CD8-positive, alpha-beta T cell (primary cell): ENCODE measurements at regions of chr15 and their contacts with region 1.

Region 1: GRCh38 chr15:78131295-78132061 is at the start of gene CIB2:
- DNase-seq: peak; percentile 47 to 89 (median 74)
- ATAC-seq: peak; percentile 87
- H3K4me3 ChIP-seq: peak within 1 kb of the TSS; percentile 82 to 91
- H3K4me3 Mint-ChIP-seq: peak within 1 kb of the TSS; percentile 82
- H3K27ac ChIP-seq: peak within 1 kb of the TSS; percentile 65 to 89
- H3K27ac Mint-ChIP-seq: peak within 1 kb of the TSS; percentile 87
- H3K4me1 ChIP-seq: peaks cover 15% of the 10 kb centered on the region
- H3K4me1 Mint-ChIP-seq: peaks cover 26% of the 10 kb centered on the region
- H3K27me3 ChIP-seq: no peaks in the 10 kb centered on the region
- H3K27me3 Mint-ChIP-seq: no peaks in the 10 kb centered on the region
- CTCF ChIP-seq: peak; percentile 75
- total RNA-seq, gene CIB2: 1.2 to 1.9 TPM

Region 2: DNA sequence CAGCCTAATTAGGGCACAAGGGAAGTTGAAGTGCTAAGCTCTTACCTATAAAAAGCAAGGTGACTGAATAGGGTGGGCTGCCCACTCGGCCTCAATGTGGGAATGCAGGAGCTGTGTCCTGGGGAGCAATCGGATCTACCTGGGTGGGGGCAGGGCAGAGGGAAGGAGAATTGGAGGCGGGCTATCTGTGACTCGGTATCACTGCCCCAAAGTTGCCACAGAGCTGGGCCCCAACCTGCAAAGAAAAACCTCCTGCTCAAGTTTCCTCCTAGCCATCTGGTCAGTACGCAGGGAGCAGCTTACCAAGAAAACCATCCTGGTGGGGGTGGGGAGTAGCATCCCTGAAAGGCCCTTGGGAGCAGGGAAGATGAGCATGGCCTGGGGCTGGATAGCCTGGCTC is 11.0 kb before region 1 on chr15:
- CTCF ChIA-PET with region 1: interaction called, 11 read pairs
- POLR2A ChIA-PET with region 1: no interaction called
- intact Hi-C with region 1: no loop called
- DNase-seq: no peak
- ATAC-seq: no peak
- H3K4me3 ChIP-seq: no peak overlapping the region
- H3K4me3 Mint-ChIP-seq: no peak overlapping the region
- H3K27ac ChIP-seq: no peak overlapping the region
- H3K27ac Mint-ChIP-seq: no peak overlapping the region
- H3K4me1 ChIP-seq: no peaks in the 10 kb centered on the region
- H3K4me1 Mint-ChIP-seq: no peaks in the 10 kb centered on the region
- H3K27me3 ChIP-seq: no peaks in the 10 kb centered on the region
- H3K27me3 Mint-ChIP-seq: no peaks in the 10 kb centered on the region
- CTCF ChIP-seq: no peak

Region 3: DNA sequence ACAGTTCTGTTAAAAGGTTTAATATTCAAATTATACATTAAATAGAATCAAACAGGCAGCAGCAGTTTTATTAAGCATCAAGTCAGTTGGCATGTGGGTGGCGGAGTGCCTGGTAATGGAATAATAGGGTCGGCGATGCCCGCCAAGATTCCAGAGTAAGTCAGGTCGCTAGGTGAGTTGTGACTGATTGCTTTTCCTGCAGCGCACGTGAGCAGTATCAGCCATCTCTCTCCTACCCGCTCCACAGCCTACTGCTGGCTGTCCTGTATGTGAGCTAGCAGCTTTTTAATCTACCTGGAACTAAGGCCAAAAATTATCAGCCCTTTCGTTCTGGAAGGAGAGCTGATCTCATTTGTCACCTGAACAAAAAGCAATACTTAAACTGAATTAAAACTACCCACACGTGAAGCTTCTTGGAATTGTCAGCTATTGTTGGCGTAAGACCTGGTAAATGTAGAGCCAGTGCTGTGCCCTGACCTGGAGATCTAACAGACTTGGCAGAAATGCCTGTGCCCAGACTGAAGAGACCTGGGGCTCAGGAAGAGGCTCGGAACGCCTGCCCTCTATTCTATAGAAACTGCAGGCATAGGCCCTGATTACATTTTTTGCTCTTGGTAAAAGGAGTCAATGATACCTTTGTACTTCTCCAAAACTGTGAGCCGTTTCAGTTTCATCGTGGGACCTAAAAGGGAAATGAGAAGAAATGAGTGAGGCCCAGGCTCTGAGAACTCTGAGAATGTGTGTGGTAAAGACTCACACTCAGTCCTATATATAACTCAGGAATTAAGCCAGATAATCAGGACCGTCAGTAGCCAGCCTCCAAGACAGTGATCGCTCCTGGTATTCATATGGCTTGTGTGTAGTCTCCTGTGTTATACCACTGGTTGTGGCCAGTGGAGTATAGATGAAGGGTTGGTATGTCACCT is 39.6 kb after region 1 on chr15:
- CTCF ChIA-PET with region 1: no interaction called
- POLR2A ChIA-PET with region 1: interaction called, 3 read pairs
- intact Hi-C with region 1: loop called (anchors 5 kb)
- DNase-seq: no peak
- ATAC-seq: no peak
- H3K4me3 ChIP-seq: no peak overlapping the region
- H3K4me3 Mint-ChIP-seq: no peak overlapping the region
- H3K27ac ChIP-seq: no peak overlapping the region
- H3K27ac Mint-ChIP-seq: no peak overlapping the region
- H3K4me1 ChIP-seq: peaks cover 26% of the 10 kb centered on the region
- H3K4me1 Mint-ChIP-seq: peaks cover 36% of the 10 kb centered on the region
- H3K27me3 ChIP-seq: no peaks in the 10 kb centered on the region
- H3K27me3 Mint-ChIP-seq: no peaks in the 10 kb centered on the region
- CTCF ChIP-seq: no peak

Region 4: GRCh38 chr15:78241007-78241406 is 109.5 kb after region 1 on chr15:
- CTCF ChIA-PET with region 1: interaction called, 8 read pairs
- POLR2A ChIA-PET with region 1: interaction called, 3 read pairs
- intact Hi-C with region 1: loop called (anchors 1 to 5 kb)
- DNase-seq: peak; percentile 65 to 90 (median 81)
- ATAC-seq: peak; percentile 96
- H3K4me3 ChIP-seq: no peak overlapping the region
- H3K4me3 Mint-ChIP-seq: no peak overlapping the region
- H3K27ac ChIP-seq: no peak overlapping the region
- H3K27ac Mint-ChIP-seq: no peak overlapping the region
- H3K4me1 ChIP-seq: no peaks in the 10 kb centered on the region
- H3K4me1 Mint-ChIP-seq: peaks cover 1% of the 10 kb centered on the region
- H3K27me3 ChIP-seq: peaks cover 0 to 3% of the 10 kb centered on the region in 2 experiments
- H3K27me3 Mint-ChIP-seq: no peaks in the 10 kb centered on the region
- CTCF ChIP-seq: peak; percentile 79

Region 5: GRCh38 chr15:78422571-78423340 is 291.3 kb after region 1 on chr15:
- CTCF ChIA-PET with region 1: no interaction called
- POLR2A ChIA-PET with region 1: no interaction called
- intact Hi-C with region 1: loop called in 1 of 2 experiments (anchors 5 kb)
- DNase-seq: peak; percentile 31 to 75 (median 57)
- ATAC-seq: peak; percentile 92
- H3K4me3 ChIP-seq: no peak overlapping the region
- H3K4me3 Mint-ChIP-seq: no peak overlapping the region
- H3K27ac ChIP-seq: no peak overlapping the region
- H3K27ac Mint-ChIP-seq: no peak overlapping the region
- H3K4me1 ChIP-seq: no peaks in the 10 kb centered on the region
- H3K4me1 Mint-ChIP-seq: peaks cover 7% of the 10 kb centered on the region
- H3K27me3 ChIP-seq: no peaks in the 10 kb centered on the region
- H3K27me3 Mint-ChIP-seq: peaks cover 14% of the 10 kb centered on the region
- CTCF ChIP-seq: peak; percentile 92